Aorta (tissue), 5 donors: ENCODE measurements at regions of chr9 and their contacts with region 1.

Region 1: GRCh38 chr9:115013998-115014397 is 83.6 kb upstream of the TNFSF8 start:
- DNase-seq: peak; percentile 75 to 84
- ATAC-seq: peak; percentile 83
- H3K4me3 ChIP-seq: no peak overlapping the region
- H3K27ac ChIP-seq: no peak overlapping the region
- H3K4me1 ChIP-seq: peaks cover 0 to 4% of the 10 kb centered on the region in 2 donors
- H3K27me3 ChIP-seq: no peaks in the 10 kb centered on the region

Region 2: GRCh38 chr9:114405294-114406034 is 608.5 kb before region 1 on chr9:
- intact Hi-C with region 1: loop called (anchors 5 kb)
- DNase-seq: peak; percentile 85 to 87
- ATAC-seq: peak; percentile 91
- H3K4me3 ChIP-seq: no peak overlapping the region
- H3K27ac ChIP-seq: no peak overlapping the region
- H3K4me1 ChIP-seq: no peaks in the 10 kb centered on the region
- H3K27me3 ChIP-seq: no peaks in the 10 kb centered on the region

Region 3: GRCh38 chr9:114674798-114675540 is 339.0 kb before region 1 on chr9:
- intact Hi-C with region 1: loop called (anchors 5 kb)
- DNase-seq: no peak
- ATAC-seq: no peak
- H3K4me3 ChIP-seq: no peak overlapping the region
- H3K27ac ChIP-seq: no peak overlapping the region
- H3K4me1 ChIP-seq: no peaks in the 10 kb centered on the region
- H3K27me3 ChIP-seq: no peaks in the 10 kb centered on the region

Region 4: DNA sequence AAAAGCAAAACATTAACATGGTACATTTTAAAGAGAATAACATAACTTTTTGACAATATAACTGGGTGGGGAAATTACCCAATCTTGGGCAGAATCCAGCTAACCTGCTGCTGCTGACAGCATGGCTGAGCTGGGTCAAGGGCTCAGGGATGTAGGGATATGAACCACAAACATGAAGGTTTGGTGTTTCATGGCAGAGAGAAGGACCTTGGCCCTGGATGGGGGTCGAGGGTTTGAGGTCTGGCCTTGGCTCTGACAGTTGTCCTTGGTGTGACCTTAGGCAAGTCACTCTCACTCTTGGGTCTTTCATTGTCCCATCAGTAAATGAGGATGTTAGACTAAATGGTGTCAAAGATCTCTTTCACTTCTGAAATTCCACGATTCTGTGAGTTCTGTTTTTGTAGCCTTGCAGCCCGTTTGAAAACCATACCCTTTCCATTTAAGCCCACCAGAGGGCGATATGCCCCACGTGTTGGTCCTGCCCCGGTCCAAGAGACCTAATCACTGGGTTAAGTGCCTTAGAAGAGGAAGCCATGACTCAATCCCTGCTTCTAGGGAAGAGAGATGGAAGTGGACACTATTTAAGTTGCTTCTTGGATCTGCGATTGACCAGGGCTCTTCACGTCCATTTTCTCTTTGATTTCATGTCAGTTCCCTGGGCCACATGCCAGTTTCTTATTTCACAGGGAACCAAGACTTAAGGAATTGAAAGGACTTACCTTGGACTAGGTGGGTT is 275.2 kb before region 1 on chr9:
- intact Hi-C with region 1: loop called (anchors 2 kb)
- DNase-seq: peak in 1 of 2 donors; percentile 80
- ATAC-seq: peak; percentile 93
- H3K4me3 ChIP-seq: no peak overlapping the region
- H3K27ac ChIP-seq: no peak overlapping the region
- H3K4me1 ChIP-seq: no peaks in the 10 kb centered on the region
- H3K27me3 ChIP-seq: peaks cover 0 to 2% of the 10 kb centered on the region in 2 donors

Region 5: DNA sequence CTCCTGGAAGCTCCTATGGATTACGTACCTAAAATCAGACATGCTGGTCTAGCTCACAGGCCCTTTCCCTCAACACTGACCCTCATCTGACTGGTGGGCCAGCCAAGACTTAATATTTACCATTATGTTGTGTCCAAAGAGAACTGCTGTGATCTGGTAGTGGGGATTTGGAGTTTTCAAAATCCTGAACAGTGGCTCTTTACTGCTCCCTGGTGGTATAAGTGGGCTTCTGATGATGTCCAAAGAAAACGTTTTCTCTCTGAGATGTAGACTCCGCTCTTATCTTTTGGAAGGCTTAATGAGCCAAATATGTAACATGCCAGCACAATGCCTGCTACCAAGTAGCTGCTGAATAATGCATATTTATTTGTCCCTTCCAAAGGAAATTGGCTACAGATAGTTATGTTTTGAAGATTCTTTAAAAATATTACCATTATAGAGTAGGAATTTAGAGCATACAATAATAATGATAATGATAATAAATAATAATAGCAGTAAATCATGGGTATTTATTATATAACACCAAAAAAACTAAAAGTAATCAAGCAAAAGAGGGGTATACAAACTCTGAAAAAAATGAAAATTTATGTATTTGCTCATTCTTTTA is 510.6 kb after region 1 on chr9:
- intact Hi-C with region 1: loop called in 1 of 2 experiments (anchors 10 kb)
- DNase-seq: no peak
- ATAC-seq: peak; percentile 85
- H3K4me3 ChIP-seq: no peak overlapping the region
- H3K27ac ChIP-seq: no peak overlapping the region
- H3K4me1 ChIP-seq: peaks cover 0 to 2% of the 10 kb centered on the region in 2 donors
- H3K27me3 ChIP-seq: no peaks in the 10 kb centered on the region